MCF 10A (cell line): ENCODE measurements at regions of chr20 and their contacts with region 1.

Region 1: DNA sequence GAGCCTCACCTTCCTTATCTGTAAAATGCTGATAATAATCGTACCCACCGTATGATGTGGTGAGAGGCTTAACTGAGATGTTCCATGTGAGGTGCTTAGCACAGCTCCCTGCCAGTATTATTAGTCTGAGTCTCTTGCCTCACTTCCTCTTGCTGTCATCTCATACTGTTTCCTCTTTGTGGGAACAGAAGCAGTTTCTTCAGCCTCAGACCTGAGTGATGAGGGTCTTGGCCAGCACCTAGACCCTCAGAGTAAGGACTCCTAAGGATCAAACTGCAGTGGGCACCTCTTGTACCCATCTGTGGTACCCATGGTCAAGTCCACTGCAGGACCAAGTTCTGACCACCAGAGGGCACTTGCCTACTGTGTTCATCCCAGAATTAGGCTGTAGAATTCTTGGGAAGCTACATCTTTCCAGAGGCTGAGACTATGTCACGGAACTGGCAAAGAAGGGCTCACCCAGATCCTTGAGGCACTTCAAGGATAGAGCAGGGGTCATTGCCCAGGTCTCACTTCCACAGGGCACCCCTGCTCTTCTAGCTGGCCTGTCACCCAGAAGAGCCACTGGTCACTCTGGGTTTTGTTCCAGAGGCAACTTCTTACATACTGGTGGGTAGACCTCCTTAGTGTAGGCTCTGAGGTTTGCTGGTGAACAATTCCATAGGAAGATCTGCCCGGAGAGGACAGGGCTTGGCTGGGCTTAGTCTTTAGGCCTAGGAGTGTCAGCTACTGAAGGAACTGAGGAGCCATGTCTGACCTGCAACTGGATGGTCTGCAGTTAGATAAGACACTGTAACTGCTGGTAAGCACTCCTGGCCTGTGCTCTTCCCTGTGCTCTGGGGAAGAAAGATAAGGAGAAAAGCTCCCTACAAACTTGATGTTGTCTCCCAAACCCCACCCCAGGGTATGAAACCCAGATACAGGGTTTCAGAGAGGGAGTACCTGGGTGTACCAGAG is 20.6 kb upstream of the SGK2 start:
- DNase-seq: peak; percentile 68
- H3K4me3 Mint-ChIP-seq: no peak overlapping the region
- H3K27ac Mint-ChIP-seq: no peak overlapping the region
- H3K4me1 Mint-ChIP-seq: peaks cover 5% of the 10 kb centered on the region
- H3K27me3 Mint-ChIP-seq: no peaks in the 10 kb centered on the region
- CTCF ChIP-seq: peak; percentile 95

Region 2: DNA sequence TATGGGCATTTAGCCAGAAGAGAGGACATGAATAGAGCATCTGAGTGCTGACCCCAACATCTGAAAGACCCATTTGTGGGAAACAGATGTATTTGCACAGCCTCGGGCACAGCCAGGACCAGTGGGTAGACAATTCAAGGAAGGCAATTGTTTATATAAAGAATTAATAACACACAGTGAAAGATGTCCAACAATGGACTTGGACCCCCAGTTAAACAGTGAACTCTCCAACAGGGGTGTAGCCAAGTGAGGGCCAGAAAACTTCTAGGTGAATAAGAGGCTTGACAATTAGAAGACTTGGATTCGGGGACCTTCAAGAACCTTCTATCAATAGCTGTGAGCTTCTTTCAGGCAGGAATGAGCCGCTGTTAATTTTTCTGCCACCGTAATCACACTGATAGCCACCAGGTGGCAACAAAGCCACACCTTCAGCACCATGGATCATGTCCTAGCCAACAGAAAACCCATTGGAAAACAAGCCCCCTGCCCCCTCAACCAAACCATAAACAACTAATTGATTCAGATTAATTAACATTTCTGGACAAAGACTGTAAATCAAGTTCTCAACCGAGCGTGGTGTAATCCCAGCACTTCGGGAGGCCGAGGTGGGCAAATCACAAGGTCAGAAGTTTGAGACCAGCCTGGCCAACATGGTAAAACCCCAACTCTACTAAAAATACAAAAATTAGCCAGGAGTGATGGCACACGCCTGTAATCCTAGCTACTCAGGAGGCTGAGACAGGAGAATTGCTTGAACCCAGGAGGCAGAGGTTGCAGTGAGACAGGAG is 89.3 kb before region 1 on chr20:
- CTCF ChIA-PET with region 1: interaction called, 25 read pairs
- POLR2A ChIA-PET with region 1: interaction called, 3 read pairs
- intact Hi-C with region 1: loop called (anchors 2 kb)
- DNase-seq: peak; percentile 56
- H3K4me3 Mint-ChIP-seq: no peak overlapping the region
- H3K27ac Mint-ChIP-seq: no peak overlapping the region
- H3K4me1 Mint-ChIP-seq: no peaks in the 10 kb centered on the region
- H3K27me3 Mint-ChIP-seq: peaks cover 9% of the 10 kb centered on the region
- CTCF ChIP-seq: peak; percentile 82

Region 3: DNA sequence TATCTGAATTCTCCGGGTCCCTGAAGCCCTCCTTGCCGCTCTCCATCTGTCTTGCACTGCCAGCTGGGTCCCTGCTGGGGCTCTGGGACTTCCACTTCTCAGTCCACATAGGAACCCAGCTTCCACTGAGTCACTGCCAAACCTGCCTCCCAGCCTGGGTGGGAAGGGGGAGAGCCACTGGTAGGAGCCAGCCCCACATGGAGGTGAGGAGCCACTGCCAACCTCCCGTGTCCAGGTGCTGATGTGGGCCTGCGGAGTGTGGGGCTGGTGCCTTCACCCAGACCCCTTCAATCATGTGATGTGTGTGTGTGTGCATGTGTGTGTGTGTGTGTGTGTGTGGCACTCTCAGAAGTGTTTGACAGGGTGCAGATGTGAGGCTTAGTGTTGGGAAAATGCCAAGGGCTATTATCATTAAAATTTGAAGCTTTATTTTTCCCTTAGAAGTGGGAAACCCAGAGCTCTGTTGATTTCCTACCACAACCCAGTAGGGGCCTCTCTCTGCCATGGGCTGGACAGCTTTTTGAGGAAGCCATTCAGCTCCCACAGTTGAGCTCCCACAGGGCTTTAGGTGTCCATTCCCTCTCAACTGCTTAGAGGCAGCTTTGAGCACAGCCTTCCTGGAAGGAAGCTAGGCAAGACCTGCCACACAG is 11.3 kb after region 1 on chr20:
- CTCF ChIA-PET with region 1: interaction called, 54 read pairs
- POLR2A ChIA-PET with region 1: interaction called, 4 read pairs
- intact Hi-C with region 1: no loop called
- DNase-seq: no peak
- H3K4me3 Mint-ChIP-seq: no peak overlapping the region
- H3K27ac Mint-ChIP-seq: no peak overlapping the region
- H3K4me1 Mint-ChIP-seq: no peaks in the 10 kb centered on the region
- H3K27me3 Mint-ChIP-seq: no peaks in the 10 kb centered on the region
- CTCF ChIP-seq: no peak

Region 4: GRCh38 chr20:43570496-43570895 is 32.3 kb after region 1 on chr20:
- CTCF ChIA-PET with region 1: interaction called, 25 read pairs
- POLR2A ChIA-PET with region 1: no interaction called
- intact Hi-C with region 1: no loop called
- DNase-seq: no peak
- H3K4me3 Mint-ChIP-seq: no peak overlapping the region
- H3K27ac Mint-ChIP-seq: no peak overlapping the region
- H3K4me1 Mint-ChIP-seq: no peaks in the 10 kb centered on the region
- H3K27me3 Mint-ChIP-seq: no peaks in the 10 kb centered on the region
- CTCF ChIP-seq: no peak

Region 5: GRCh38 chr20:43583982-43584432 is 45.8 kb after region 1 on chr20:
- CTCF ChIA-PET with region 1: interaction called, 52 read pairs
- POLR2A ChIA-PET with region 1: no interaction called
- intact Hi-C with region 1: no loop called
- DNase-seq: peak; percentile 96
- H3K4me3 Mint-ChIP-seq: no peak overlapping the region
- H3K27ac Mint-ChIP-seq: peak overlapping the region; percentile 40
- H3K4me1 Mint-ChIP-seq: peaks cover 10% of the 10 kb centered on the region
- H3K27me3 Mint-ChIP-seq: no peaks in the 10 kb centered on the region
- CTCF ChIP-seq: no peak

Region 6: GRCh38 chr20:43691928-43692524 is 153.8 kb after region 1 on chr20:
- CTCF ChIA-PET with region 1: interaction called, 59 read pairs
- POLR2A ChIA-PET with region 1: no interaction called
- intact Hi-C with region 1: loop called (anchors 1 kb)
- DNase-seq: peak; percentile 65
- H3K4me3 Mint-ChIP-seq: no peak overlapping the region
- H3K27ac Mint-ChIP-seq: no peak overlapping the region
- H3K4me1 Mint-ChIP-seq: no peaks in the 10 kb centered on the region
- H3K27me3 Mint-ChIP-seq: no peaks in the 10 kb centered on the region
- CTCF ChIP-seq: peak; percentile 76

Region 7: DNA sequence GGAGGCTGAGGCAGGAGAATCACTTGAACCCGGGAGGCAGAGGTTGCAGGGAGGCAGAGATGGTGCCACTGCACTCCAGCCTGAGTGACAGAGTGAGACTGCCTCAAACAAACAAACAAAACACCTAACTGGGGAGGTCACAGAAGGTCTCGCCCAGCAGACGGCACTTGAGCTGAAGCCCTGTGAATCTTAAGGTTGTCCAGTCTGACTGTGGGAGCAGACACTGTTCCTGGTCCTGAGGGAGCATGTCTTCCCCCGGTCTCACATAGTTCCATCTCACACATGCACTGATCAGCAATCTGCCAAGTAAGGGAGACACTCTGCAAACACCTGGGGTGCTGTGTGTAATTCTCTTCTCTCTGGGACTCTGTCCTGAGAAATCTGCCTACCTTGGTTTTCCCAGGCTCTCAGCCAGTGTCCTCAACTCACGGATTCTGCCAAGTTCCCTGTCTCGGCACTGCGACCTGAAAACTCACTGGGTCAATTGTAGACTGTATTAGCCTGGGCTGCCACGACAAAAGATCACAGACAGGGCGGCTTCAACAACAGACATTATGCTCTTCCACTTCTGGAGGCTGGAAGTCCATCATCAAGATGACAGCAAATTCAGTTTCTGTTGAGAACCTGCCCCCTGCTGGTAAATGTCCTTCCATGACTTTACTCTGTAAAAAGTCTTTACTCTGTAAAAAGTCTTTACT is 554.5 kb after region 1 on chr20:
- CTCF ChIA-PET with region 1: interaction called, 10 read pairs
- POLR2A ChIA-PET with region 1: no interaction called
- intact Hi-C with region 1: no loop called
- DNase-seq: peak; percentile 61
- H3K4me3 Mint-ChIP-seq: no peak overlapping the region
- H3K27ac Mint-ChIP-seq: no peak overlapping the region
- H3K4me1 Mint-ChIP-seq: peaks cover 16% of the 10 kb centered on the region
- H3K27me3 Mint-ChIP-seq: no peaks in the 10 kb centered on the region
- CTCF ChIP-seq: peak; percentile 52